Left cardiac atrium (tissue), 4 donors: ENCODE measurements at regions of chr1 and their contacts with region 1.

Region 1: DNA sequence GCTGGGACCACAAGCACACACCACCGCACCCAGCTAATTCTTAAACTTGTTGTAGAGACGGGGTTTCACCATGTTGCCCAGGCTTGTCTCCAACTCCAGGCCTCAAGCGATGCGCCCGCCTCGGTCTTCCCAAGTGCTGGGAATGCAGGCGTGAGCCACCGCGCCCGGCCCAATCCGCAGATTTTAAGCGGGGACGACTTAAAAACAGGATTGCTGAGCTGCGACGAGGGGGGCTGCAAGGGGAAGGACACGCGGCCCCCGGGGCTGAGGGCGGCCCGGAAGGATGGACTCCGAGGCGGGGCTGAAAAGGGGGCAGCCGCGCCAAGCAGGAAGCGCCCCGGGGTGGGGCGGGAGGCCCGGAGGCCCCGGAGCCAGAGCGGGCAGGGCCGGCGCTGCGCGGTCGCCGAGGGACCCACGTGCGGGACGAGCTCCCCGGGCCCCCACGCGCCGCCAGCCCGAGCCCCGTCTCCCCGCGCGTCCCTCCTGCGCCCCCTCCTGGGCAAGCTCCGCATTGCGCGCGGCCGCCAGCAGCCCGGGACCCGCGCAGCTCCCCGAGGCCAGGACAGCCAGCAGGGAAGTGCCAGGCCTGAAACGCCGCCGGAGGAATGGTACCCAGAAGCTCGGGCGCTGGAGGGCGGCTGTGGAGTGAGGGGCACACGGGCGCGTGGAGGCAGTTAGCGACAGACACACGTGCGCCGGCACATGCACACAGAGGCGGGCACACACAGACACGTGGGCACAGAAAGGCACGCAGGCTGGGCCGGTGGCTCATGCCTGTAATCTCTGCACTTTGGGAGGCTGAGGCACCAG is 5.5 kb upstream of the PRKCZ start:
- DNase-seq: peak; percentile 69
- ATAC-seq: peak; percentile 77 to 83

Region 2: DNA sequence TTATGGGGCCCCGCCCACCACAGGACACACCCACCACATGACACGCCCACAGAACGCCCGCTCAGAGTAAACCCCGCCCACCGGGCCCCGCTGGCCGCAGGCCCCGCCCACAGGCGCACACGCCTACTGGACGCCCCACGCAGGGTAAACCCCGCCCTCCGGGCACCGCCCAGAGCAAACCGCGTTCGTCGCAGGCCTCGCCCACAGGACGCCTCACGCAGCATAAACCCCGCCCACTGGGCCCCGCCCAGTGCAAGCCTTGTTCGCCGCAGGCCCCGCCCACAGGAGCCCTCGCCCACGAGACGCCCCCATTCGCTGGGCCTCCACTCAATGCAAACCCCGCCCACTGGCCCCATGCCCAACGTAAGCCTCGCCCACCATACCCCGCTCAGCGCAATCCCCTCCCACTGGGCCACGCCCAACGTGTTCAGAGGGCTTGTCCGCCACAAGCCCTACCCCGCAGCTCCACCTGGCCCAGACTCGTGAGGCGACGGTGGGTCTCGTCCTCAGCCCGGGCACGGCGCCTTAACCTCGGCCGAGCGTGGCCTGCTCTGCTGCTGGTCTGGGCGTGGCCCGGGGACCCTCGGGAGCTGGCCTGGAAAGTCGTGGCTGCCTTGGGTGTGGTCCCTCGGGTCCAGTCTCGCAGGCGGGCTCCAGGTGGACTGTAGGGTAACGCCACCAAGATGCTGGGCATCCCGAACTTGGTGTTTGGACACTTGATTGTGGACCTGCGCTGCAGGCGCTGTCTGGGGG is 125.2 kb before region 1 on chr1:
- intact Hi-C with region 1: no loop called
- DNase-seq: peak; percentile 100
- ATAC-seq: peak; percentile 92 to 94

Region 3: DNA sequence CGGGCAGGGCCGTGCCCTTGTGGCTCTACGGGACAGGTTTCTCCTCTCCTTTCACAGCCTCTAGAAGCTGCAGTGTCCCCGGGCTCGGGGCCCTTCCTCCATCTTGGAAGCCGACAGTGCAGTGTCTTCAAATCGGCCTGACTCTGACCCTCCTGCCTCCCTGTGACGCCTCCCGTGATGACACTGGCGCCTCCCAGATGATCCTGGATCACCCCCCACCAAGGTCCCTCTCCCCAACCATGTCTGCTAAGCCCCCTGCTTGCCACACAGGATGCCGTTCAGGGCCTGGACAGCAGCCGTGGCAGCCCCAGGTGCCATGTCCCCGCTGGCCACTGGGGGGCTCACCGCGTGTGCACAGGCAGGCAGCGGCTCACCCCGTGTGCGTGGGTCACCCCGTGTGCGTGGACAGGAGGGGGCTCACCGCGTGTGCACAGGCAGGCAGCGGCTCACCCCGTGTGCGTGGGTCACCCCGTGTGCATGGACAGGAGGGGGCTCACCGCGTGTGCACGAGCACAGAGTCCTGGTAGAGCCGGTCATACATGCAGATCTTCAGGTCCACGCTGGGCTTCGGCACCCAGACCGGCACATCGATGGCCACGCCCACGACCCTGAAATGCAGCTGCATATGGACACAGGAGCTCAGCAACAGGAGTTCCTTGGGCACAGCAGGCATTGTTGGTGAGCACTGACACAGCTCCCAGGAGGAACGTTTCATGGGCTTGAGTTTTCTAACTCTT is 100.7 kb before region 1 on chr1:
- intact Hi-C with region 1: loop called (anchors 2 to 5 kb)
- DNase-seq: peak; percentile 64
- ATAC-seq: peak; percentile 80 to 88

Region 4: GRCh38 chr1:1959840-1960479 is 84.8 kb before region 1 on chr1:
- intact Hi-C with region 1: loop called in 1 of 2 experiments (anchors 5 kb)
- DNase-seq: peak; percentile 83
- ATAC-seq: peak; percentile 92 to 93